HEK293 (cell line): ENCODE measurements at regions of chr20 and their contacts with region 1.

Region 1: DNA sequence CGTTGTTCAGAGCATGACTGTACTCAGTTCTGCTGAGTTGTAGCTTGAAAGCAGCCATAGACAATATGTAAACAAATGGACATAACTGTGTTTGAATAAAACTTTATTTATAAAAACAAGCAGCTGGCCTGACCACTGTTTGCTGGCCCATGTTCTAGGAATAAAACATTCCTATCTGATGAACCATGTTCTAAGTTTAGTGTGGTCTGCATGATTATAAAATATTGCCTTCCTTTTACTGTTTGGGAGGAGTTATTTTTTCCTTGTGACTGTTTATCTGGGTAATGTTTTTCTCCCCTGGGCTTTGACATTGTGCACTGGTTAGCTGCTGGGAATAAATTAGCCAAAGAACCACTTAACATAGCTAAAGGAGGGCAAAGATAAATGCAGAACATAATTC is 55.1 kb downstream of the CDS2 start:
- H3K4me3 ChIP-seq: no peak overlapping the region
- H3K27ac ChIP-seq: no peak overlapping the region
- H3K4me1 ChIP-seq: no peaks in the 10 kb centered on the region
- CTCF ChIP-seq: no peak

Region 2: DNA sequence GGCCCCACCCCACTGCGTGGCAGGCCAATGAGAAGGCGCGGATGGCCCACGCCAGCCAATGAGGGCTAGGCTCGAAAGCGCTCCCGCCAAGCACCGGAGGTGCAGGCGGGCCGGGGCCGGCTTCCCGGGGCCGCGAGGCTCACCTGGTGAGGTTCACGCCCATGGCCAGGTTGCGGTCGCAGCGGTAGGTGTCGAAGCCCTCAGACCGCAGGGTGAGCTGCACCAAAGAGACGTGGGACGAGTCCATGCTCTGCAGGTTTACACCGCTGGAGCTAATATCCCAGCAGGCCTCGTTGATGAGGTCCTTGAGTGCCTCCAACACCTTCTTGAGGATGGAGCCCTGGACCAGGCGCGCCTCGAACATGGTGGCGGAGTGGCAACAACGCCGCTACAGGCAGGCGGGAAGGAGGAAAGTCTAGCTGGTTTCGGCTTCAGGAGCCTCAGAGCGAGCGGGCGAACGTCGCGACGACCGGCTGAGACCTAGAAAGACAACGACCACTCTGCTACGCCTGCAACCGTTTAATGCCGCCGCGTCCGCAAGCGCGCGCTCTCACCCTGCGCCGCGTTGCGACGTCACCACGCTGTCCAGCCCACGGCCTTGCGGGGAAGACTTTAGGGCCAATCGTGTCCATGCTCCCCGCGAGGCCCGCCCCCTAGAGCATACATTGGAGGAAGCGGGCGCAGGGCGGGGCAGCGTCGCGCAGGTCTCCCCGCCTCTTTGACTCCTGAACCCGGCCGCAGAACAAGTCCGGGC is 62.3 kb before region 1 on chr20 and contains the start of gene PCNA:
- CTCF ChIA-PET with region 1: interaction called, 160 read pairs
- POLR2A ChIA-PET with region 1: interaction called, 11 read pairs
- H3K4me3 ChIP-seq: peak within 1 kb of the TSS; percentile 85
- H3K27ac ChIP-seq: peak within 1 kb of the TSS; percentile 97
- H3K4me1 ChIP-seq: peaks cover 9% of the 10 kb centered on the region; the same call in 1 of the 2 replicates
- CTCF ChIP-seq: peak; percentile 73

Region 3: GRCh38 chr20:5211803-5212714 is 30.1 kb after region 1 on chr20:
- CTCF ChIA-PET with region 1: no interaction called
- POLR2A ChIA-PET with region 1: no interaction called
- H3K4me3 ChIP-seq: no peak overlapping the region
- H3K27ac ChIP-seq: no peak overlapping the region
- H3K4me1 ChIP-seq: no peaks in the 10 kb centered on the region
- CTCF ChIP-seq: no peak

Region 4: GRCh38 chr20:5268449-5268848 is 86.5 kb after region 1 on chr20:
- CTCF ChIA-PET with region 1: no interaction called
- POLR2A ChIA-PET with region 1: no interaction called
- H3K4me3 ChIP-seq: no peak overlapping the region
- H3K27ac ChIP-seq: no peak overlapping the region
- H3K4me1 ChIP-seq: no peaks in the 10 kb centered on the region
- CTCF ChIP-seq: no peak